Esophagus muscularis mucosa (tissue), 4 donors: ENCODE measurements at regions of chr6 and their contacts with region 1.

Region 1: DNA sequence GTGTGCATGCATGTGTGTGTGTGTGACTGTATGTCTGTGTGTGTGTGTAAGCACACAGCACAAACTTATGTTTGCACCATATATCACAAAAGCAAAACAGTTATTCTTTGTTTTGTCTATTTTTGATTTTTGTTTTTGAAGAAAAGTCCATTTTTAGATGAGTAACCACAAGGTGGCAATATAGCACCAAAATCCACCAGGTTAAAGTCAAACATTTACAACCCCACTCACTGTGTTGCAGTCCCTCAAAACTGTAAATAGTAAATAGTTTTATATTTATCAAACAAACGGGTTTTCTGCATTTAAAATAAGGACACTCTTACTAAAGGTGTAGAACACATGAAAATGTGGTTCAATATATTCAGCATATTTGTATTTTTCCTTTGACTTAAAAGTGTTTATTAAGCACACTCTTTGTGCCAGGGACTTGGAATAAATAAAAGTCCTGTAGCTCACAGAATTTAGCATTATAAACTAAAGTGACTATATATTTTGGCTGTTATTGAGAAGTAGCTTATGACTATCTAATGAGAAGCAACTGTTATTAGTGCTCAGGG is 118.5 kb downstream of the GFRAL start:
- DNase-seq: no peak
- H3K4me3 ChIP-seq: no peak overlapping the region
- H3K27ac ChIP-seq: no peak overlapping the region
- H3K4me1 ChIP-seq: peaks cover 0 to 12% (median 7%) of the 10 kb centered on the region in 4 donors
- H3K27me3 ChIP-seq: no peaks in the 10 kb centered on the region
- CTCF ChIP-seq: peak; percentile 47 to 61 (median 50)
- EP300 ChIP-seq: no peak
- POLR2A ChIP-seq: no peak

Region 2: DNA sequence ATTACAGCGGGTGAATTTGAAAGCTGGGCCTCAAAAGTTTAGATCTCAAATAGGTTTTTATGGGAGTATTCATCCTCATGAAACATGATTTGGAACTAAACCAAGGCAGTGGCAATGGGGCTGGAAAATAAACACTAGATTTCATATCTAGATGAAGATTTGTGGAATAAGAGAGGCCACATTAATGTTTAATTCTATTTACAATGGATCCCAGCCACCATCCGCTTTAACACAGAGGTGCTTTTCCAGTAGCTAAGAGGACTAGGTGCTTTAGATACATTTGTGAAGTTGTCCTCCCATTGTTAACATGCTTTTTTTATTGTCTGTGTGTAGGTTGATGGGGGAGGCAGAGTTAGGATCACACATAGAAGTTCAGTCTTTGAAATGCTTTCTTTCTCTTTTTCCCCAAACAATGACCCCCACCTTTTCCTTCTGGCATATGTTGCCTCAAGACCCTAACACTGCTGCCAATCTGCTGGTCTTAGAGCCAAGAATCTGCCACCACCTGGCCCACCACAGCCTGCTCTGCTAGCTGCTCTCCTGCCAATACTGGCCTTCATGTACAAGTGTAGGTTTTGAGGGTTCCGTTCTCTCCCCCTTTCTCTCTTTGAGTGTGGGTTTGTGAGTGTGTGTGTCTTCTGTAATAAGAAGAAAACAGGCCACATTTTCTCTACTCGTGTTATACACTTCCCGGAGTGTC is 146.3 kb before region 1 on chr6:
- intact Hi-C with region 1: no loop called
- DNase-seq: no peak
- H3K4me3 ChIP-seq: no peak overlapping the region
- H3K27ac ChIP-seq: no peak overlapping the region
- H3K4me1 ChIP-seq: no peaks in the 10 kb centered on the region
- H3K27me3 ChIP-seq: no peaks in the 10 kb centered on the region
- CTCF ChIP-seq: no peak
- EP300 ChIP-seq: no peak
- POLR2A ChIP-seq: no peak

Region 3: GRCh38 chr6:55557146-55557545 is 111.4 kb after region 1 on chr6:
- intact Hi-C with region 1: no loop called
- DNase-seq: no peak
- H3K4me3 ChIP-seq: no peak overlapping the region
- H3K27ac ChIP-seq: no peak overlapping the region
- H3K4me1 ChIP-seq: no peaks in the 10 kb centered on the region
- H3K27me3 ChIP-seq: no peaks in the 10 kb centered on the region
- CTCF ChIP-seq: no peak
- EP300 ChIP-seq: no peak
- POLR2A ChIP-seq: no peak

Region 4: GRCh38 chr6:55594442-55594841 is 148.7 kb after region 1 on chr6:
- intact Hi-C with region 1: no loop called
- DNase-seq: no peak
- H3K4me3 ChIP-seq: no peak overlapping the region
- H3K27ac ChIP-seq: no peak overlapping the region
- H3K4me1 ChIP-seq: no peaks in the 10 kb centered on the region
- H3K27me3 ChIP-seq: no peaks in the 10 kb centered on the region
- CTCF ChIP-seq: no peak
- EP300 ChIP-seq: no peak
- POLR2A ChIP-seq: no peak

Region 5: GRCh38 chr6:55886185-55886836 is 440.6 kb after region 1 on chr6:
- intact Hi-C with region 1: loop called (anchors 5 kb)
- DNase-seq: no peak
- H3K4me3 ChIP-seq: no peak overlapping the region
- H3K27ac ChIP-seq: no peak overlapping the region
- H3K4me1 ChIP-seq: peaks cover 6 to 16% (median 14%) of the 10 kb centered on the region in 4 donors
- H3K27me3 ChIP-seq: no peaks in the 10 kb centered on the region
- CTCF ChIP-seq: peak; percentile 29 to 41 (median 40)
- EP300 ChIP-seq: no peak
- POLR2A ChIP-seq: no peak